ENCODE measurements at regions of chr3 and their contacts with region 1.

Region 1: DNA sequence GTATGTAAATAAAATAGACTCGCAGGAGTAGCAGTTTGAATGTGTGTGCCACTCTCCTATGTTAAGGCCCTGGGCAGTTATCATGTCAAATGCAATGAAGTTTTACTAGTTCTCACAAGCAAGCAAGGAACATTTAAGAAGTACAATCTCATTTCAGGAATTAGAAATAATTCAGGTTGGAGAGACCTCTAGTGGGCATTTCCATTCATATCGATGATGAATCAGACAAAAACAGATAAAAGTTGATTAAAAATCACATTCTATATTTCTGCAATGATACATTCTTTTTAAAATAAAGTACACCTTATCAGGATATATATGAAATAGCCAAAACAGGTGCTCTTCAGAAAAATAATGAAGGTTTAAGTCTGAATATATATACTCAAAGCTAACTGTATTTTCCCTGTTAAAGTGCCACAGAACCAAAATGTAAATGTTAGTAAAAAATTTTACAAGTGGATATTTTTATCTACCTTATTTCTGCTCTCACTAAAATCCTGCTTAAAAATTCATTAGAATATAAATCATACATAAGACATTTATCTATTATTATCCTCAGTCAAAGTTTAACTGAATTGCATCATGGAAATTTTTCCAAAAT is 492.4 kb upstream of the FRG2C start:
- DNase-seq: no peak
- H3K4me3 Mint-ChIP-seq: no peak overlapping the region
- H3K27ac Mint-ChIP-seq: no peak overlapping the region
- H3K4me1 Mint-ChIP-seq: no peaks in the 10 kb centered on the region
- H3K27me3 Mint-ChIP-seq: no peaks in the 10 kb centered on the region

Region 2: GRCh38 chr3:73868688-73869315 is 1302.9 kb before region 1 on chr3:
- CTCF ChIA-PET with region 1: no interaction called
- intact Hi-C with region 1: loop called (anchors 2 kb)
- DNase-seq: peak; percentile 5
- H3K4me3 Mint-ChIP-seq: no peak overlapping the region
- H3K27ac Mint-ChIP-seq: no peak overlapping the region
- H3K4me1 Mint-ChIP-seq: no peaks in the 10 kb centered on the region
- H3K27me3 Mint-ChIP-seq: no peaks in the 10 kb centered on the region

Region 3: GRCh38 chr3:74267588-74268184 is 904.0 kb before region 1 on chr3:
- CTCF ChIA-PET with region 1: no interaction called
- intact Hi-C with region 1: loop called (anchors 5 kb)
- DNase-seq: peak; percentile 19
- H3K4me3 Mint-ChIP-seq: no peak overlapping the region
- H3K27ac Mint-ChIP-seq: no peak overlapping the region
- H3K4me1 Mint-ChIP-seq: no peaks in the 10 kb centered on the region
- H3K27me3 Mint-ChIP-seq: no peaks in the 10 kb centered on the region

Measured in activated naive CD4-positive, alpha-beta T cell treated with anti-CD3 and anti-CD28 coated beads for 36 hours (primary cell).